GM10248 (cell line): ENCODE measurements at regions of chr11 and their contacts with region 1.

Region 1: DNA sequence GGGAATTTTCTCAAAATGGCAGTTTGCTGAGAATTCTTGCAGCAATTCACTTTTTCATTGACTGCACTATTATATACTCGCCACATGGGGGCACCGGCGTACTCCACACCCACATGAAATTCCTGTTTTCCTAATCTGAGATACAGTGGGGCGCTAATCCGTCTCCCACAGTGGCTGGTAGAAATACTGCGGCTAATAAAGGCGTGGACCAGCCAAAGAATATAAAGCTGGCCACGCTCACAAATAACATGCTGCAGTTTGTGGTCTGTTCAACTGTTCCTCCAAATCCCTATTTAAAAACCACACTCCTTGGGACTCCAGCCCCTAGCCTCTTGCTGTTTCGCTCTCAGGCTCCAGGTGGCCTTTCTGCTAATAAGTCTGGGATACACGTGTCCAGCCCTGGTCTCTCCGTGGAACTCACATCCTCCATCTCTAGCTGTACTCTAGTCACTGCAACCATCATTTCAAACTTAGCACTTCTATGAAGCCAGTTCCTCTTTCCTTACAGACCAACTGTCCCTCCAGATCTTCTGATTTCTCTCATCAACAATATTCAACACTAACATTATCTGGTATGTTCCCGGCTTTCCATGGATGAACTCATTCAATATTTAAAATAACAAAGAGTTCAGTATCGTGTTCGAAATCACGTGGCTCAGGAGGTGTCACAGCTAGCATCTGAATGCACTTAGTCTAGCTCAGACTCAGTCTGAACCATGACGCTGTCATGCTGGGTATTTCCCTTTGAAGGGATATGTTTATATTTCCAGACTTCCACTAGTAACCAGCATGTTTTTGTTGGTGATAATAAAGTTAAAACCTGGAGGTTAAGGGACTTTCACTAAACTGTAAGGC is 22.0 kb downstream of the TBRG1 start:
- DNase-seq: peak; percentile 55
- CTCF ChIP-seq: peak; percentile 75

Region 2: GRCh38 chr11:124633355-124633754 is 11.3 kb before region 1 on chr11:
- CTCF ChIA-PET with region 1: interaction called, 52 read pairs
- POLR2A ChIA-PET with region 1: no interaction called
- DNase-seq: no peak
- CTCF ChIP-seq: peak; percentile 12

Region 3: GRCh38 chr11:124662106-124662505 is 17.5 kb after region 1 on chr11:
- CTCF ChIA-PET with region 1: interaction called, 13 read pairs
- POLR2A ChIA-PET with region 1: no interaction called
- DNase-seq: no peak
- CTCF ChIP-seq: no peak

Region 4: DNA sequence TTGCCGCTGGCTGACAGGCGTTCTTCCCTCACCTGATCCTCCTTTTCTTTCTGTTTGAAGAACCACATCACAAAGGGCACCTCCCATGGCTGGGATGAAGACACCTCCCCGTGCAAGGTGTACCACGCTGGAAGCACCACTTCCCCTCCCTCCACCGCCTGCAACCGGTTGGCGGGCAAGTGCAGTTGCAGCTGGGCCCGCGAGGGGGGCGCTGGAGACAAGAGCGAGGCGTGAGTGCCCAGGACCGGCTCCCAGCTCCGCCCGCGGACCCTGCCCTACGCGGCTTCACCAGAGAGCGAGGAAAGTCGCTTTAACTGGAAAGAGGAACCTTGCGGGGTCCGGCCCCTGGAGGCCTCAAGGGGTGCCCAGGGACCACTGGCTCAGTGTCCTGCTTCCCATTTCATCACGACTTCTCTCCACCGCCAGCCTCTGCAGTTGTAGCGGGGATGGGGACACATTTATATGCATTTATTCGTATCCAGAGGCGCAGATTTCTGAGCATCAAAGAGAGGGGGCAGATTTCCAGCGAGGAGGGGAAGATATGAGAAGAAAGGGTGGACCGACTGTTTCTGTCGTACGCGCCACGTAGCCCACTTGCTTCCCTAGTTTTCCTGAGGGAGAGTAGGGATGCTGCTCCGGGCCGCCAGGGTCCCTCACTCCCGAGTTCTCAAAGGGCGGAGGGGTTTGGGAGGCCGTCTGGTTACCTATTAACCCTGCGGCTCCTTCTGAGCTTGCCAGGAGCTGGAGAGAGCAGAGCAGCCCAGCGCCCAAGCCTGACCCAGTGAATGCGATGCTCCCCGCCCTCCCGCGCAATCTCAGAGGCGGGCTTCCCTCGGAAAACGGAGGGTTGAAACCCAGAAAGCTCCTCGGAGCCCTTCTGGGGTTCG is 113.9 kb after region 1 on chr11:
- CTCF ChIA-PET with region 1: interaction called, 12 read pairs
- POLR2A ChIA-PET with region 1: no interaction called
- DNase-seq: peak; percentile 80
- CTCF ChIP-seq: peak; percentile 90

Region 5: DNA sequence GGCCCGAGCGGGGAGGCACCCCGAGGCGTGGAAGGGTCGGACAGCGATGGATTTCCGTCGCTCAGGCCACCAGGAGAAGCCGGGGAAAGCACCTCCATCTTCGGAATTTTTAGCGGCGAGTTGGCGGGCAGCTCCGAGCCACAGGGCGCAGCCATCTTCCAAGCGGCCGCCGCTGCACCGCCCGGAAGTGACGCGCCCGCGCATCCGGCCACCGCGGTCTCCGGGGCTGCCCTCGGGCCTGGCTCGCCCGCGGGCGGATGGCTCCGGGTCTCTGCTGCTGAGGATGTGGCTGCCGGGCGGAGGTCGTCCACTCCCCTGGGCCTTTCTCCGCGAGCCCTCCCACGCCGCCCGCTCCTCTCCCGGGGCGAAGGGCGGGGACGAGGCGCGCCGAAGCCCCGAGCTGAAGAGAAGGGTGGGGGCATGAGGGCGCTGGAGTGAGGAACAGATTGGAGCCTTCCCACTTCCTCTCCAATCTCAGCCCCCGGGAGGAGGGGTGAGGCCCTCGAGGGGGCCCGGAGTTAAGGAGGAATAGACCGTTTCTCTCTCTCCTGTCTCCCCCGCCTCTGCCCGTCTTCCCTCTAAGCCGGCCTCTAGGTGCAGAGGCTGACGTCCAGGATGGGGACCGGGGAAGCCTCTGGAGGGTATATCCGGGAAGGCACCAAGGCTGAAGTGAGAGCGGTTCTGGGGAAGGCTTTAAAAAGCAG is 155.7 kb after region 1 on chr11 and contains the start of gene MSANTD2:
- CTCF ChIA-PET with region 1: interaction called, 11 read pairs
- POLR2A ChIA-PET with region 1: no interaction called
- DNase-seq: peak; percentile 90
- CTCF ChIP-seq: no peak